ENCODE measurements at regions of chr3 and their contacts with region 1.

Region 1: DNA sequence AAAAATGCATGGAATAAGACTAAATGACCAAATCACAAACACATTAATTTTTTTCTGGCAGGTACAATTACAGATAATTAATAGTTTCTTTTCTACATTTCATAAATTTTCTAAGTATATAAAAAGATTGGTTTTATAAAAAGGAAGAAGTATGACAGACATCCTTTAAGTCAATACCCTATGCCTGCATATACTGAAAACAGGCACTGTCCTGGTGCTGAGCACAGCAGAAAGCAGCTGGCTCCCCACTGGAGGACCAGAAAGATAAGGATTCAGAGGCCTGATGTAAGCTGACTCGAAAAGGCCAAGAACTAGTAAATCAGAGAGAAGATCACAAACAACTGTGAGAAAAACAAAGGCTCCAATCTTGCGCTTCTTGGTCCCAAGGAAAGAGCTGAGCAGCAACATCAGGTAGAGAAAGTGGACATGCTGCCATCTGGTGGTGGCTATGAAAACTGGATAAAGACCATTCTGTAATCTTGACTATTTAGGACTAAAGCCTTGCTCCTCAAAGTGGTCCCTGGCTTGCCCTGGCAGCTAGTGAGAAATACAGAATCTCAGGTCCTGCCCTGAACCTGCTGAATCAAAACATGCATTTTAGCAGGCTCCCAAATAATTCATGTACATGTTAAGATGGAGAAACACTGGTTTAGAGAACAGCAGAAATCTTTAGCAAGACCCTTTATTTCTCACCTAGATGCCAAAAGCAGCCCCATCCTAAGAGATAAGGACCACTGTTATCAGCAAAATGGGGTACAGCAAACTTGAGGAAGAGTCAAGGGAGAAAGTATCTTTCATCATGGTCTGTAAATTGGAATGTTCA is 76.0 kb downstream of the TRANK1 start:
- DNase-seq: peak; percentile 56
- H3K4me3 ChIP-seq: peak overlapping the region in 1 of 2 experiments; percentile 43; a peak in 1 of 4 replicates
- H3K27ac ChIP-seq: no peak overlapping the region
- H3K4me1 ChIP-seq: peaks cover 0 to 9% of the 10 kb centered on the region in 2 experiments; a peak in 2 of 4 replicates
- H3K27me3 ChIP-seq: peaks cover 4% of the 10 kb centered on the region; the same call in 1 of the 2 replicates
- CTCF ChIP-seq: peak; percentile 83
- EP300 ChIP-seq: no peak
- RAD21 ChIP-seq: peak; percentile 89

Region 2: GRCh38 chr3:36434687-36435426 is 434.0 kb before region 1 on chr3:
- CTCF ChIA-PET with region 1: no interaction called
- POLR2A ChIA-PET with region 1: no interaction called
- DNase-seq: no peak
- H3K4me3 ChIP-seq: no peak overlapping the region
- H3K27ac ChIP-seq: peak overlapping the region in 1 of 2 experiments; percentile 64; a peak in 2 of 4 replicates
- H3K4me1 ChIP-seq: peaks cover 0 to 14% of the 10 kb centered on the region in 2 experiments; a peak in 2 of 4 replicates
- H3K27me3 ChIP-seq: no peaks in the 10 kb centered on the region
- CTCF ChIP-seq: no peak
- EP300 ChIP-seq: no peak
- RAD21 ChIP-seq: no peak

Region 3: GRCh38 chr3:36729204-36730056 is 139.4 kb before region 1 on chr3:
- CTCF ChIA-PET with region 1: interaction called, 182 read pairs
- POLR2A ChIA-PET with region 1: no interaction called
- DNase-seq: peak; percentile 54
- H3K4me3 ChIP-seq: no peak overlapping the region; a peak in 1 of 4 replicates
- H3K27ac ChIP-seq: no peak overlapping the region
- H3K4me1 ChIP-seq: peaks cover 0 to 12% of the 10 kb centered on the region in 2 experiments; a peak in 2 of 4 replicates
- H3K27me3 ChIP-seq: no peaks in the 10 kb centered on the region
- CTCF ChIP-seq: peak; percentile 82
- EP300 ChIP-seq: no peak
- RAD21 ChIP-seq: peak; percentile 96

Region 4: GRCh38 chr3:36741285-36741684 is 127.5 kb before region 1 on chr3:
- CTCF ChIA-PET with region 1: interaction called, 17 read pairs
- POLR2A ChIA-PET with region 1: no interaction called
- DNase-seq: no peak
- H3K4me3 ChIP-seq: no peak overlapping the region
- H3K27ac ChIP-seq: no peak overlapping the region
- H3K4me1 ChIP-seq: peaks cover 0 to 32% of the 10 kb centered on the region in 2 experiments; a peak in 2 of 4 replicates
- H3K27me3 ChIP-seq: no peaks in the 10 kb centered on the region
- CTCF ChIP-seq: peak; percentile 23; the same call in 1 of the 2 replicates
- EP300 ChIP-seq: no peak
- RAD21 ChIP-seq: peak; percentile 46

Region 5: DNA sequence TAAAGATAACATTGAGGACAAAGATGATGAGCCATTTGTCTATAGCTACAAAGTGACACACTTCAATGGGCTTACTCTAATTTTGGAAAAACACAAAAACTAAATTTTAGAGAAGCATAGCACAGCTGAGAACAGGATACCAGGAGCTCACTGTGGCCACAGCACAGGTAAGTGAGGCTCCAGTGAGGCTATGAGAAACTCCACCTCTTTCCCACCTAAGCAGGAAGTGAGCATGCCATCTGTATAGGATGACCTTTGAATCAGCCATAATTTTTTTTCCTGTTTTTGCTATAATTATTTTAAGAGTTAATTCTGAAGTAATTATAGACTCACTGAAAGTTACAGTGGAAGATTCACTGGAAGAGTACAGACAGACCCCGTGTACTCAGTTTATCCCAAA is 22.4 kb before region 1 on chr3:
- CTCF ChIA-PET with region 1: interaction called, 15 read pairs
- POLR2A ChIA-PET with region 1: no interaction called
- DNase-seq: no peak
- H3K4me3 ChIP-seq: no peak overlapping the region
- H3K27ac ChIP-seq: no peak overlapping the region
- H3K4me1 ChIP-seq: no peaks in the 10 kb centered on the region
- H3K27me3 ChIP-seq: no peaks in the 10 kb centered on the region
- CTCF ChIP-seq: no peak
- EP300 ChIP-seq: no peak
- RAD21 ChIP-seq: no peak

Region 6: DNA sequence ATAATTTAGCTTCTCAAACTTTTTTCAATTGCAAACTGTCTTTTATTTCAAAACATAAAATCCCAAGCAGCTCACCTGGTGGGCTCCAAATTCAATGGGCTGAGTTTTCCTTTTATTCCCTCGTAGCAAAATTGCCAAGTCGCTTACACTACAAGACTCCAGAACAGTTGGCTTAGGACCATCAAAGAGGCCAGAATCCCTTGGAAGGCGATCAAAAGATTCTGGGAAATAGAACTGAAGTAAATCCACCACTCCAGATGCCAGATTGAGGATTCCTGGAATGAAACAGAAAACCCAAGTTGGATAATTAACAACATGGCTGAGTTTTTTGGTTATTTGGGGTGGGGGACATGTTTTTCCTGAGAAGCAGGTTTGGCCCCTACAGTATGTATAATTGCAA is 16.8 kb before region 1 on chr3:
- CTCF ChIA-PET with region 1: interaction called, 19 read pairs
- POLR2A ChIA-PET with region 1: no interaction called
- DNase-seq: no peak
- H3K4me3 ChIP-seq: no peak overlapping the region
- H3K27ac ChIP-seq: no peak overlapping the region
- H3K4me1 ChIP-seq: no peaks in the 10 kb centered on the region
- H3K27me3 ChIP-seq: no peaks in the 10 kb centered on the region
- CTCF ChIP-seq: no peak
- EP300 ChIP-seq: no peak
- RAD21 ChIP-seq: no peak

Region 7: DNA sequence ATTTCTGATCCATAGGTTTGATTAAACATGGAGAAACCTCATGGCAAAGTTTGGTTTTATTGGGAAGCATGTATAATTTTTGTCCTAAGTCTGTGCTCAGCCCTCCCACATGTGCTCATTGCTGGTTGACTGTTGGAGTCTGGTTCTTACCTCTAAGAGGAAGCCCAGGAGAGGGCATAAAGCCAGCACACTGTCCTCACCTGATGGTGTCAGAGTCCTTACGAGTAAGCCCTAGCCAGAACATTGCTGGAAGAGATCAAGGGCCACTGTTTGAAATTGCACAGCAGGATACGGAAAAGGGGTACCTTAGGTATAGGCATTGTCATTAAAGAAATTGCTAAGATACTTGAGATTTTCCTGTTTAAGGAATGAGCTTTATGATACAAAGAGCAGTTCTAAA is 145.8 kb after region 1 on chr3:
- CTCF ChIA-PET with region 1: no interaction called
- POLR2A ChIA-PET with region 1: no interaction called
- DNase-seq: no peak
- H3K4me3 ChIP-seq: no peak overlapping the region
- H3K27ac ChIP-seq: no peak overlapping the region
- H3K4me1 ChIP-seq: no peaks in the 10 kb centered on the region
- H3K27me3 ChIP-seq: no peaks in the 10 kb centered on the region
- CTCF ChIP-seq: no peak
- EP300 ChIP-seq: no peak
- RAD21 ChIP-seq: no peak

Measured in SK-N-SH (cell line).